Activated CD8-positive, alpha-beta T cell treated with anti-CD3 and anti-CD28 coated beads for 36 hours (primary cell): ENCODE measurements at regions of chr1 and their contacts with region 1.

Region 1: DNA sequence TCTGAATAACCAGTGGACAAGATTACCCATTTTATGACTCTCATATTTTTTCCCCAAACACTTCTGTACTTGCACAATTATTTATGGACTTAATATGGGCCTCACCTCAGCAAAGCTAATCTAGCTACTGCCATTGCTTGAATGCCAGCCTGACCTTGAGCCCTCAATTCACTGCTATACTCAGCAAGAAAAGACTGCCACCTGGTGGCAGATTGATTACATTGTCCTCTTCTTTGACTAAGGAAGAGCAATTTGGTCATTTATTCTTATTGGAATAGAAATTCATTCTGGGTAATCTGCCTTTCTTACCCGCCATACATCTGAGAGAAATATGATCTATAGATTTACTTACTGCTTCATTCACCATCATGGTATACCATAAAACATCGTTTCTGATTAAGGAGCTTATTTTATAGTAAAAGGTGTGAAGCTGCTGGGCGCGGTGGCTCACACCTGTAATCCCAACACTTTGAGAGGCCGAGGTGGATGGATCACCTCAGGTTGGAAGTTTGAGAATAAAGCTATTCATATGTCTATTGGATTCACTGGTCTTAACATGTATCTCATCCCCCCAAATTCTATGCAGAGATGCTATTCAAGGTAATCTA is 32.9 kb upstream of the DIPK1A start:
- DNase-seq: peak; percentile 85
- ATAC-seq: peak; percentile 78
- H3K4me3 Mint-ChIP-seq: no peak overlapping the region
- H3K27ac Mint-ChIP-seq: peak overlapping the region; percentile 22
- H3K4me1 Mint-ChIP-seq: peaks cover 47% of the 10 kb centered on the region
- H3K27me3 Mint-ChIP-seq: no peaks in the 10 kb centered on the region
- CTCF ChIP-seq: peak; percentile 92

Region 2: DNA sequence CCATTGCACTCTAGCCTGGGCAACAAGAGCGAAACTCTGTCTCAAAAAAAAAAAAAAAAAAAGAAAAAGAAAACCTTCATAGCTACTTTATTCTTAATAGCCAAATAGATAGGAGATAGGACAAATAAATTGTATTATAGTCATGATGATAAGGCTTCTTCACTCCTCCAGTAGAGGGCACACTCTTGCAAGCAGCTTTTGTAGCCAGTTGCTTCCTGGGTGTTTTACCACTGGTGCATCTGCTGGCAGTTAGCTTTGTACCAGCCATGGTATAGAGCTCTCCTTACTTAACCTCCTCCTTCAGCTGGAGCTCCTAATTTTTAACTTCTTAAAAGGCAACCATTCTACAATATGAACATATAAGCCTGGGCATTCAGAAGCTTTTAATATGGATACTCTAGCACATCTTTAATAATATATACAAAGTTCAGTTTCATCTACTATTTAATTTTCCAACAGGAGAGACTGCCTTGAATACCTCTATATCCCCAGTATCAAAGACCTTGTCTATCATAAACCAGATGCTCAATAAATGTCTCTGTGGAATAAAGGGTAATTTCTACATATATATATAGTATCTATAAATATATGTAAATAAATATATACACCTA is 245.1 kb before region 1 on chr1:
- CTCF ChIA-PET with region 1: interaction called, 10 read pairs
- POLR2A ChIA-PET with region 1: no interaction called
- intact Hi-C with region 1: no loop called
- DNase-seq: peak; percentile 51
- ATAC-seq: peak; percentile 74
- H3K4me3 Mint-ChIP-seq: no peak overlapping the region
- H3K27ac Mint-ChIP-seq: no peak overlapping the region
- H3K4me1 Mint-ChIP-seq: no peaks in the 10 kb centered on the region
- H3K27me3 Mint-ChIP-seq: no peaks in the 10 kb centered on the region
- CTCF ChIP-seq: peak; percentile 68

Region 3: DNA sequence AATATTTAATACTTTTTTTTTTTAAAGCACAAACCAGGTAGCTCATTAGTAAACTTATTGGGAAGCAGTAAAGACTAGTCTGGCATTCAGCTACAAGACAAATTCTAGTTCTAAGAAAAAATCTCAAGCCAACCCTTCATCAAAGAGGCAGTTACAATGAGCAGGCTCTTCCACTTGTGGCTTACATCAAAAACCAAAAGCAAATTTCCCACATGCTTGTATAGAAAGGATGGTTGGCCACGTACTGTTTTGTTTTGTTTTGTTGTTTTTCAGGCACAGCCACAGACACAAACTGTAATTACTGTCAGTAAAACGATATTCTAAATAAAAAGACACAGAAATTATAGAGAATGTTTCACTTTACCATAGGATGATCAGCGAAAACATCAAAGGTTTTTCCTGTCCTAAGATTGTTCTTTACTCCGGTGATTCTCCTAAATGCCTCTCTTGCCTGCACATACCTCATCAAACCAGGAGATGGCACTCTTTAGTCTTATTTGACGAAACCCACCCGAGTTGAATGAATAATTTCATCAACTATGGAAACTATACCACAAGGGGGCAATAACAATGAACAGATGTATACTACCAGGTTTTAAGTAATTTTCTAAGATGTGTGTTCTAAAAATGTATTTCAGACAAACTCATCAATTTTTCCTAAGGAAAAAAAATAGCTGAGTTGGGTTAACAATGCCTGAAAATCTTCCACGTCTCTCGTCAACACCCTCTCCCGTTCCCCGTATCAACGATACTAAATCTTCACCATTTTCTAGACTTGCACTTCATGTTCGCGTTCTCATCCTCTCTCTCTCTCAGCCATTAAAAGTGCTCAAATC is 135.4 kb before region 1 on chr1:
- CTCF ChIA-PET with region 1: interaction called, 193 read pairs
- POLR2A ChIA-PET with region 1: interaction called, 7 read pairs
- intact Hi-C with region 1: loop called (anchors 1 kb)
- DNase-seq: peak; percentile 68
- ATAC-seq: peak; percentile 95
- H3K4me3 Mint-ChIP-seq: peak overlapping the region; percentile 36
- H3K27ac Mint-ChIP-seq: peak overlapping the region; percentile 63
- H3K4me1 Mint-ChIP-seq: peaks cover 20% of the 10 kb centered on the region
- H3K27me3 Mint-ChIP-seq: no peaks in the 10 kb centered on the region
- CTCF ChIP-seq: peak; percentile 95

Region 4: GRCh38 chr1:92882819-92883218 is 111.4 kb before region 1 on chr1:
- CTCF ChIA-PET with region 1: interaction called, 36 read pairs
- POLR2A ChIA-PET with region 1: interaction called, 3 read pairs
- intact Hi-C with region 1: no loop called
- DNase-seq: peak; percentile 46
- ATAC-seq: peak; percentile 83
- H3K4me3 Mint-ChIP-seq: no peak overlapping the region
- H3K27ac Mint-ChIP-seq: peak overlapping the region; percentile 82
- H3K4me1 Mint-ChIP-seq: peaks cover 29% of the 10 kb centered on the region
- H3K27me3 Mint-ChIP-seq: no peaks in the 10 kb centered on the region
- CTCF ChIP-seq: no peak

Region 5: DNA sequence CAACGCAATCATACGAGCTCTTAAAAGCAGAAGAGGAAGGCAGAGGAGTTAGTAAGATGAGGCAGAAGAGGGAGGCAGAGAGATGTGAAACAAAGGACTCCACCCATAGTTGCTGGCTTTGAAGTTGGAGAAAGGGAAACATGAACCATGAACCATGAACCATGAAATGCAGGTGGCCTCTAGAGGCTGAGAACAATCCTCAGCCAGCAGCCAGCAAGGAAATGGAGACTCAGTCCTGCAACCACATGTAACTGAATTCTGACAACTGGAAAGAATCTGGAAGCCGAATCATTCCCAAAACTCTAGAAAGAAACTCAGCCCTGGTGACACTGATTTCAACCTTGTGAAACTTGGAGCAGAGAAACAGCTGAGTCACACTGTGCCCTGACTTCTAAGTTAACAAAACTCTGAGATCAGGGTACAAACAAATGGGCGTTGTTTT is 43.0 kb before region 1 on chr1:
- CTCF ChIA-PET with region 1: interaction called, 492 read pairs
- POLR2A ChIA-PET with region 1: interaction called, 3 read pairs
- intact Hi-C with region 1: no loop called
- DNase-seq: peak; percentile 20
- ATAC-seq: peak; percentile 69
- H3K4me3 Mint-ChIP-seq: no peak overlapping the region
- H3K27ac Mint-ChIP-seq: no peak overlapping the region
- H3K4me1 Mint-ChIP-seq: peaks cover 43% of the 10 kb centered on the region
- H3K27me3 Mint-ChIP-seq: no peaks in the 10 kb centered on the region
- CTCF ChIP-seq: no peak

Region 6: DNA sequence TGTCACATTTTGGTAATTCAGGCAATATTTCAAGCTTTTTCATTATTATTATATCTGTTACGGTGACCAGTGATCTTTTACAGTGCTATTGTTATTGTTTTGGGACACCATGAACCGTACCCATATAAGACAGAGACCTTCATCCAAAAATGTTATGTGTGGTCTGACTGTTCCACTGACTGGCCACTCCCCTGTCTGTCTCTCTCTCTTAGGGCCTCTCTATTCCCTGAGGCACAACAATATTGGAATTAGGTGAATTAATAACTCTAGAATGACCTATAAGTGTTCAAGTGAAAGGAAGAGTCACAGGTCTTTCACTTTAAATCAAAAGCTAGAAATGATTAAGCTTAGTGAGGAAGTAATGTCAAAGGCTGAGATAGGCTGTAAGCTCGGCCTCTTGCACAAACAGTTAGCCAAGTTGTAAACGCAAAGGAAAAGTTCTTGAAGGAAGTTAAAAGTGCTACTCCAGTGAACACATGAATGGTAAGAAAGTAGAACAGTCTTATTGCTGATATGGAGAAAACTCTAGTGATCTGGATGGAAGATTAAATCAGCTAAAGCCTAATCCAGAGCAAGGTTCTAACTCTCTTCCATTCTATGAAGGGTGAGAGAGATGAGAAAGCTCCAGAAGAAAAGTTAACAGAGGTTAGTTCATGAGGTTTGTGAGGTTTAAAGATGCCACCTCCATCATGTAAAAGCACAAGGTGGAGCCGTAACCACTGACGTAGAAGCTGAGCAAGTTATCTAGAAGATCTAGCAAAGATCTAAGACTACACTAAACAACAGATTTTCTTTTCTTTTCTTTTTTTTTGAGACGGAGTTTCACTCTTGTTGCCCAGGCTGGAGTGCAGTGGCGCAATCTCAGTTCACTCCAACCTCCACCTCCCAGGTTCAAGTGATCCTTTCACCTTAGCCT is 13.2 kb before region 1 on chr1:
- CTCF ChIA-PET with region 1: interaction called, 492 read pairs
- POLR2A ChIA-PET with region 1: interaction called, 8 read pairs
- intact Hi-C with region 1: no loop called
- DNase-seq: peak; percentile 69
- ATAC-seq: peak; percentile 66
- H3K4me3 Mint-ChIP-seq: peak overlapping the region; percentile 68
- H3K27ac Mint-ChIP-seq: peak overlapping the region; percentile 95
- H3K4me1 Mint-ChIP-seq: peaks cover 72% of the 10 kb centered on the region
- H3K27me3 Mint-ChIP-seq: no peaks in the 10 kb centered on the region
- CTCF ChIP-seq: no peak

Region 7: DNA sequence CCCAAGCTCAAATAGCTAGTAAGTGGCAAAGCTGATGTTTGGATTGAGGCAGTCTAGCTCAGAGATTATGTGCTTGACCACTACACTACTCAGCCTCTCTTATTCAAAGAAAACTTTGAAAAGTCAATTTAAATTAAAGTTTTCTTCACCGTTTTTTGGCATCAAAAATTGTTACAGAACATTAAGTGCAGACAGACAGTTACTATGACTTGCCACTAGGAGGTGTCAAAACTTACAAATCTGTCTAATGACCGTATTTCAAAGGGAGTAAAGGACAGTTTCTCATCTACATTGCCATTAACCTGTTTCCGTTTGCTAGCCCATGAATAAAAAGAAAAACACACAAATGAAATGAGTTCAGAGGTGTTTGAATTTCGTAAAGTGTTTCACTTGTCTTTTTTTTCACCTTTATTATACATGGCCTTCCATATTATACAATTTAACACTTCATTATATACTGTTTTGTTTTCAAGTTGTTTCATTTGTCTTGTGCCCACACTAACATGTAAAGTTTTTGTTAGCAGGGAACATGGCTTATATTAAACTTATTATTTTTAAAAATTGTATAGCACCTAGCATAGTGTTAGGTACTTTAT is 27.4 kb after region 1 on chr1:
- CTCF ChIA-PET with region 1: interaction called, 12 read pairs
- POLR2A ChIA-PET with region 1: no interaction called
- intact Hi-C with region 1: no loop called
- DNase-seq: no peak
- ATAC-seq: peak; percentile 95
- H3K4me3 Mint-ChIP-seq: no peak overlapping the region
- H3K27ac Mint-ChIP-seq: no peak overlapping the region
- H3K4me1 Mint-ChIP-seq: no peaks in the 10 kb centered on the region
- H3K27me3 Mint-ChIP-seq: peaks cover 3% of the 10 kb centered on the region
- CTCF ChIP-seq: peak; percentile 88

Region 8: DNA sequence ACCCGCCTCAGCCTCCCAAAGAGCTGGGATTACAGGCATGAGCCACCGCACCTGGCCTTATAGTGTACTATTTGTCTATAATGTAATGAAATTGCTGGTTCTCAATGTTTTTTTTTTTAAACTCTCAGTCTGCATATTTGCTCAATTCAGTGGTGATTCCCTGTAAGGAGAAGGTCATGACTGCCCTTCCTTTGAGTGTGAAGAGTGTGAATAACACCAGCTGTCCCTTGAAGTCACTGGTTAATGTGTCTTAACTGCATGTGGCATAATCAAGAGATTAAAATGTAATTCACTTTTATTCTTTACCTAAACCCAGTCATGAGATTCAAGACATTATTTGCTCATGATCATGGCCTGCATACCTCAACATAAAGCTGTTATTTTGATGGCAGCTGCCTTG is 115.4 kb after region 1 on chr1:
- CTCF ChIA-PET with region 1: no interaction called
- POLR2A ChIA-PET with region 1: no interaction called
- intact Hi-C with region 1: no loop called
- DNase-seq: no peak
- ATAC-seq: no peak
- H3K4me3 Mint-ChIP-seq: no peak overlapping the region
- H3K27ac Mint-ChIP-seq: no peak overlapping the region
- H3K4me1 Mint-ChIP-seq: peaks cover 29% of the 10 kb centered on the region
- H3K27me3 Mint-ChIP-seq: no peaks in the 10 kb centered on the region
- CTCF ChIP-seq: no peak